ENCODE measurements at regions of chr5 and their contacts with region 1.

Region 1: DNA sequence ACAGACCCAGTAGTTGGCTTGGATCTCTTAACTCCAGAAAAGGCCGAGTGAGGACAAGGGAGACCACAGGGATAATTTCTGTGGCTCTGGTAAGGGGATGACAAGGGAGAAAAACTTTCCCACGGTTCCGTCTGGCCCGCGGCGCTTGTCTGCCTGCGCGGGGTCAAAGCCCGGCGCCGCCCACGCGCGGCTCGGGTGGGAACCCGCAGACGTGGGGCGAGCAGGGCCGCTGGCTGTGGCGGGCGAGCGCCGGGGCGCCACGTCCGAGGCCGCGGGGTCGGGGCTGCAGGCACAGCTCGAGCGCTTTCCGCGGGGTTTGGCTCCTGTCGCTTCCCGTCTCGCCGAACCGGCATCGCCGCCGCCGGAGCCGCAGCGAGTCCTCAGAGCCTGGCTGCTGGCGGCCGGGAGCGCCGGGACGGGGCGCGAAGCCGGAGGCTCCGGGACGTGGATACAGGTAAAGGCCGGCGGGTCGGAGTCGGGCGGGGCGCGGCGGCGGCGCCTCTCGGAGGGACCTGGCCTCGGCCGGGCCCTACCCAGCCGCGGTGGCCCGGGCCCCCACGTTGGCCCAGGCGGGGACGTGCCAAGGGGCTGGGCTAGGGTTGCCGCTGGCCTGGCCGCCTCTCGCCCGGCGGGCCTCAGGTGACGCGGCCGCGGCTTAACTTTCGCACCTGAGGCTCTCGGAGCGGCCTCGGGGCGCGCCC is at the start of gene RNF180:
- DNase-seq: peak in 1 of 2 donors; percentile 75
- H3K4me3 ChIP-seq: peak within 1 kb of the TSS; percentile 82 to 84
- H3K27ac ChIP-seq: peak within 1 kb of the TSS; percentile 95 to 97
- H3K4me1 ChIP-seq: peaks cover 4 to 13% of the 10 kb centered on the region in 2 donors
- H3K27me3 ChIP-seq: no peaks in the 10 kb centered on the region
- CTCF ChIP-seq: no peak
- total RNA-seq, gene RNF180: 7.9 TPM

Region 2: GRCh38 chr5:64207978-64208377 is 42.3 kb after region 1 on chr5:
- intact Hi-C with region 1: loop called (anchors 5 kb)
- DNase-seq: no peak
- H3K4me3 ChIP-seq: no peak overlapping the region
- H3K27ac ChIP-seq: no peak overlapping the region
- H3K4me1 ChIP-seq: no peaks in the 10 kb centered on the region
- H3K27me3 ChIP-seq: no peaks in the 10 kb centered on the region
- CTCF ChIP-seq: peak in 2 of 3 experiments; percentile 21 to 50

Region 3: GRCh38 chr5:65066385-65067146 is 900.9 kb after region 1 on chr5:
- intact Hi-C with region 1: loop called (anchors 10 kb)
- DNase-seq: no peak
- H3K4me3 ChIP-seq: no peak overlapping the region
- H3K27ac ChIP-seq: peak overlapping the region; percentile 41 to 43
- H3K4me1 ChIP-seq: peaks cover 3 to 21% of the 10 kb centered on the region in 2 donors
- H3K27me3 ChIP-seq: no peaks in the 10 kb centered on the region
- CTCF ChIP-seq: no peak

Region 4: DNA sequence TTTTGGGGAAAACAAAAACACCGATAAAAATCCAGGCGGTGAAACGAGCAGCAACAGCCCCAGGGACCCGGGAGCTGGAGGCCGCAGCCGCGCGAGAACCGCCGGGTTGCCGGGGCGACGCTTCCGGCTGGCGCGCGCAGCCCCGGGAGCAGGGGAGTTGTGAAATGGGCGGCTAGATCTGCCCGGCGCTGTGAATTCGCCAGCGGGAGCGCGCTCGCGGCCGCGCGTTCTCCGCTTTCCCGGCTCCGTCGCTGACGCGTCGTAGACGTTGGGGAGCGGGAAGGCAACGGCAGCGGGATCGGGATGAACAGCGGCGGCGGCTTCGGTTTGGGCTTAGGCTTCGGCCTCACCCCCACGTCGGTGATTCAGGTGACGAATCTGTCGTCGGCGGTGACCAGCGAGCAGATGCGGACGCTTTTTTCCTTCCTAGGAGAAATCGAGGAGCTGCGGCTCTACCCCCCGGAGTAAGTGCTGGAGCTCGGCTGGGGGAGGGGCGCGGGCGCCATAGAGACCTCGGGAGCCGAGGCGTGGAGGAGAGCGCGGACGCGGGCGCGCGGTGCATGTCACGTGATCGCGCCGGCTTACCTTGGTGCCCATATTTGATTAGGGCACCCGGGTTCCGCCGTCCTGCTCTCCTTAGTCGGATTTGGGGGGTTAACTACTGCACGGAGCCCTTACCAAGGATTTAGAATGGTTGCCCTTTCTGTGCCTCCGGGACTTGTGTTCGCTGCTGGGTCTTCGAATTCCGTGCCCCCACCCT is 1978.6 kb after region 1 on chr5 and contains the start of gene SREK1:
- intact Hi-C with region 1: loop called (anchors 5 kb)
- DNase-seq: peak; percentile 65 to 94
- H3K4me3 ChIP-seq: peak within 1 kb of the TSS; percentile 89 to 92
- H3K27ac ChIP-seq: peak within 1 kb of the TSS; percentile 98 to 100
- H3K4me1 ChIP-seq: peaks cover 0 to 11% of the 10 kb centered on the region in 2 donors
- H3K27me3 ChIP-seq: no peaks in the 10 kb centered on the region
- CTCF ChIP-seq: no peak
- total RNA-seq, gene SREK1: 31.6 TPM